Heart left ventricle (tissue), 16 donors: ENCODE measurements at regions of chr13 and their contacts with region 1.

Region 1: DNA sequence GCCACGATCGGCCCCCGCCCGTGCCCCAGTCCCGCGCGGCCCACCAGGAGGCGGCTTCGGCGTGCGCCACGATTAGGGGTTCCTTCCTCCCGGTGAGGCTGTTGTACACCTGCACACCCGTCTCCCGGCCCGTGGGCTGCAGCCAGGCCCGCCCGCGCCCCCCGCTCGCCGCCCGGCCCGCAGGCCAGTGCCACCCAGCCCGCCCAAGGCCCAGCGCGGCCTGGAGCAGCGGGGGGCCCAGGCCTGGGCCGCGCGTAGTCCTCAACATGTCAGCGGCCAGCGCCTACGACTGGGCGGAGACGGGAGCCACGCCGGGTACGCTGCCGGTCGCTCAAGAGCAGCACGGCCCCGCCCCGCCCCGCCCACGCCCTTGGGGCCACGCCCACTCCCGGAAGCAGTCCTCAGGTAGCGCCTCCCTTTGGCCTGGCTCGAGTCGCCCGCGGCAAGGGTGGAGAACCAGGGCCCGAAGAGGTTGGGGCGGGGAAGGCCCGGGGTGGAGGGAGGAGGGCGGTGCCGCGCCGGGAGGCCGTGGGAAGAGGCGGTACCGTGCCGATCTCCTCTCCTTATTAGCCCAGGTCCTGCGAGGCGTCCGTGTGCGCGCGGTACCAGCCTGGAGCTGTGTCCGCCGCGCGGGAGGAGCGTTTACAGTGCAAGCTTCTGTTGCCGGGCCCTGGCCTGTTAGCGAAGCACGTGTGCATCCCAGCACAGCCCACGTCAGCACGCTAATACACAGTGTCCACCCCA is at the start of gene CARS2:
- DNase-seq: peak; percentile 94 to 98 (median 96)
- ATAC-seq: peak; percentile 96 to 99 (median 98)
- H3K4me3 ChIP-seq: peak within 1 kb of the TSS; percentile 34 to 92 (median 78)
- H3K27ac ChIP-seq: peak within 1 kb of the TSS; percentile 59 to 100 (median 82)
- H3K4me1 ChIP-seq: peaks cover 4 to 35% (median 16%) of the 10 kb centered on the region in 12 donors
- H3K27me3 ChIP-seq: no peaks in the 10 kb centered on the region
- CTCF ChIP-seq: peak in 7 of 12 donors; percentile 12 to 36 (median 23)
- POLR2A ChIP-seq: peak in 1 of 2 donors; percentile 59
- total RNA-seq, gene CARS2: 35.4 to 48.4 (median 43.5) TPM

Region 2: DNA sequence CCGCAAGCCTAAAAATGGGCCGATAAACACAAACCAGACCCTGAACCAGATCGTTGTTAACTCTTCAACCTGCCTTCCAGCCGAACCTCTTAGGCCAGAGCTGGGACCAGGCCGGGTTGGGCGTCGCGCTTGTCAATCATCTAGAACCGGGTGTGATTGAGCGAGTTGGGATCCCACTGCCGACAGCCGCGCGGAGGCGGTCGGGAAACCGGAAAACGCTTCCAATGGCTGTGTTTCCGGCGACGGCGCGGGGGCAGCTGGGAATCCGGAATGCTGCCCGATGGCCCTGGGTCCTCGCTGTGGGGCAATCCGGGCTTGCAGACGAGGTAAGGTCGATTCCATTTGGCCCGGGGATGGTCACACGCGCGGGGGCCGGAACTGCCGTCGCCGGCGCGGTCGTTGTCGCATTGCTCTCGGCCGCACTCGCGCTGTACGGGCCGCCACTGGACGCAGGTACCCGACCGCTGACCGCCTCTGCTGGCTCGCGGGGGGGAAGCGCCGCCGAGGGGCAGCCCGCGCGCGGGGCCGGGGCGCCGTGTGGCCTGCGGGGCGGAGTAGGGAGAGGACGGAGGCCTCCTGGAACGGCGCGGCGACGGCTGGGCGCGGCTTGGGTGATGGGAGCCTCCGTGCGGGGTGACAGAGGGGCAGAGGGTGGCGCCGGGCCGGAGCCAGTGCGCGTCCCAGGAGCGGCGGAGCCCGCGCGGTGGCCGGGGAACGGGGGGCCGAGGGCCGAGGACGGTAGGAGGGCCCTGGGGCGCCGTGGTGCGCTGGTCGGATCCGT is 90.5 kb before region 1 on chr13 and contains the start of gene NAXD:
- intact Hi-C with region 1: loop called in 7 of 10 experiments (anchors 5 to 10 kb)
- DNase-seq: peak; percentile 95 to 98 (median 96)
- ATAC-seq: peak; percentile 94 to 98 (median 95)
- H3K4me3 ChIP-seq: peak within 1 kb of the TSS; percentile 61 to 99 (median 84)
- H3K27ac ChIP-seq: peak within 1 kb of the TSS; percentile 74 to 99 (median 92)
- H3K4me1 ChIP-seq: peaks cover 0 to 47% (median 28%) of the 10 kb centered on the region in 12 donors
- H3K27me3 ChIP-seq: peaks cover 0 to 6% (median 0%) of the 10 kb centered on the region in 9 donors
- CTCF ChIP-seq: no peak
- POLR2A ChIP-seq: peak in 1 of 2 donors; percentile 77
- total RNA-seq, gene NAXD: 19.2 to 31.4 (median 25.0) TPM